GM12878 (cell line): ENCODE measurements at regions of chr1 and their contacts with region 1.

Region 1: DNA sequence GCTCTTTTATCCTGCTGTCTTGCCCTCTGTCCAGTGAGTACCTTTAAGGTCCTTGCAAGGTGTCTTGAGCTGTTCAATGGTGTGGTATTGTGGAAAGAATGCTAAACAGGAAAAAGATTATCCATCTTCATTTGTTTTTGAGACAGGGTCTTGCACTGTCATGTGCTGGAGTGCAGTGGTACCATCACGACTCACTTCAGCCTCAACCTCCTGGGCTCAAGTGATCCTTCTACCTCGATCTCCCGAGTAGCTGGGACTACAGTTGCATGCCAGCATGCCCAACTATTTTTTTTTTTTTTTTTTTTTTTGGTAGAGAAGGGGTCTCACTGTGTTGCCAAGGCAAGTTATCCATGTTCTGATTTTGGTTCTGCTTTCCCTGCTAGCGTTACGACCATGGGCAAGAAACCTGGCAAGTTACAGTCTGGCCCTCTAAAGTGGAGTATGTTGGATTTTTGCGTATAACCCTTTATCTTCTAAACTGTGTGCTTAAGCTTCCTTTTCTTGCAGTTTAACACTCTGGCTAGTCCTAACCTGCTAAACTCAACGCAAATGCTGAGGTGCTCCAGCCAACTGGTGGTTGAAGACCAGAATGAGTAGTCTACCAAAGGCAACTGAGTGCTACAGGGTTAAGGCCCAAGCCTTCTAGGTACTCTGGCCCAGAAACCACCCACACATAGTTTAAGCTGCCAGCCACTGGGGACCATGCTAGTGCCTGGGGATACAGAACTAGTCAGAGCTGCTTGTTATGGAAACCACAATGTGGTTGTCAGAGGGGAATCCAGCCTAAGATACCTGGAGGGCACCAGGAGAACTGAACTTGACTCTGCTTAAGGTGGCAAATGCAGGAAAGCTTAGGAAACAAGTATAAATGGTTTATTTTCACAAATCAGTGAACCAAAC is 7.9 kb downstream of the RPL11 start:
- DNase-seq: no peak
- ATAC-seq: peak; percentile 82
- H3K4me3 ChIP-seq: no peak overlapping the region
- H3K27ac ChIP-seq: no peak overlapping the region
- H3K4me1 ChIP-seq: peaks cover 7% of the 10 kb centered on the region
- H3K27me3 ChIP-seq: no peaks in the 10 kb centered on the region
- CTCF ChIP-seq: no peak
- EP300 ChIP-seq: no peak
- POLR2A ChIP-seq: no peak
- RAD21 ChIP-seq: no peak

Region 2: DNA sequence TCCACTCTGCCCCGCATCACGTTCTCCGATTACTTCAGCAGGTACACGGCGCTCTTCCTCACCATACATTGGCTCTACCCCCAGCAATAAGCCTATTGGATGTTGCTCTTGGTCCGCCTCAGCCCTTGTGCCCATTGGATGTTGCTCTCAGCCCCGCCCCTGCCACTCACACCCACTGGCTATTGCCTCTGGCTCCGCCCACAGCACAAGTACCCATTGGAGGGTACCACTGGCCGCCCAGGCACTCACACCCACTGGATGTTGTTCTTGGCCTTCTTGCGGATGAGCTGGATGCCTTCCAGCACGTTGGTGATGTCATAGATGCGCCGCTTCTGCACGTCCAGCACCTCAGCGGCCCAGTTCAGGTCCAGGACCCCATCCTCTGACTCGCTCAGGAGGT is 177.9 kb before region 1 on chr1:
- CTCF ChIA-PET with region 1: no interaction called
- POLR2A ChIA-PET with region 1: no interaction called
- RAD21 ChIA-PET with region 1: no interaction called
- SMC1A ChIA-PET with region 1: no interaction called
- in situ Hi-C with region 1: no loop called
- intact Hi-C with region 1: no loop called
- DNase-seq: no peak
- ATAC-seq: no peak
- H3K4me3 ChIP-seq: no peak overlapping the region
- H3K27ac ChIP-seq: no peak overlapping the region
- H3K4me1 ChIP-seq: peaks cover 25% of the 10 kb centered on the region
- H3K27me3 ChIP-seq: no peaks in the 10 kb centered on the region
- CTCF ChIP-seq: no peak
- EP300 ChIP-seq: no peak
- POLR2A ChIP-seq: no peak
- RAD21 ChIP-seq: no peak

Region 3: DNA sequence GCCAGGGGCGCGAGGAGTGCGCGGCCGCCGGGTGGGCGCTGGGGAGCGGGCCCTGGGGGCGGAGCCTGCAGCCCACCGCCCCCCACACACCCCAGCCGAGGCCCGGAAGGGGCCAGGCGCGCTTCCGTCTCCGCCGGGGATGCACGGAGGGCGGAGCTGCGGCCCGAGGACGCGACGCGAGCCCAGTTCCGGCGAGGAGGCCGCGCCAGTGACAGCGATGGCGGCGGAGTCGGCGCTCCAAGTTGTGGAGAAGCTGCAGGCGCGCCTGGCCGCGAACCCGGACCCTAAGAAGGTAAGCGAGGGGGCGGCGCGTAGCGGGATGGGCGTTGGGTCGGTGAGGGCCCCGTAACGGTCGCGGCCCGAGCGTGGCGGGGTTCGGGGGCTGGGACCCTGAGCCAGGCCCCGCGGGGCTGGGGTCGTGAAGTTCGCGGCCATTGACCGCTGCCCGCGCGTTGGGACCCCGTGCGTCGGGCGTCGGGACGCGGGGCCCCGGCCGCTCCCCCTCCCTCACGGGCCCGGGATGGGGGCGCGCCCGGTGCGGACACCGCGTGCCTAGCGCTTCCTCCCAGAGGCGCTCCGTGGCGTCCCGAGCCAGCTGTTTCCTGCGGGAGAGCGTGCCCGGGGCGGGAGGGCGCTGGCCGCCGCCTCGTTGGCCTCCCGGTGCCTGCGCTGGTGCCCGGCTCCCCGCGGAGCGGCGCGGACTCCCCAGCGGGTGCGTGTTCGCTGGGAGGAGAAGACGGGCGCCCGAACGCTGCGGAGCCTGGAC is 43.9 kb after region 1 on chr1 and contains the start of gene ELOA:
- CTCF ChIA-PET with region 1: interaction called, 155 read pairs
- POLR2A ChIA-PET with region 1: interaction called, 9 read pairs
- RAD21 ChIA-PET with region 1: interaction called, 8 read pairs
- SMC1A ChIA-PET with region 1: interaction called, 137 read pairs
- in situ Hi-C with region 1: loop called (anchors 5 kb)
- intact Hi-C with region 1: loop called (anchors 2 kb)
- DNase-seq: no peak
- ATAC-seq: peak; percentile 92
- H3K4me3 ChIP-seq: peak within 1 kb of the TSS; percentile 84
- H3K27ac ChIP-seq: peak within 1 kb of the TSS; percentile 73
- H3K4me1 ChIP-seq: peaks cover 12% of the 10 kb centered on the region
- H3K27me3 ChIP-seq: no peaks in the 10 kb centered on the region
- CTCF ChIP-seq: no peak
- EP300 ChIP-seq: no peak
- POLR2A ChIP-seq: peak; percentile 99
- RAD21 ChIP-seq: no peak
- polyA plus RNA-seq, gene ELOA: 20.1 to 24.8 TPM